ENCODE measurements at regions of chr16 and their contacts with region 1.

Region 1: DNA sequence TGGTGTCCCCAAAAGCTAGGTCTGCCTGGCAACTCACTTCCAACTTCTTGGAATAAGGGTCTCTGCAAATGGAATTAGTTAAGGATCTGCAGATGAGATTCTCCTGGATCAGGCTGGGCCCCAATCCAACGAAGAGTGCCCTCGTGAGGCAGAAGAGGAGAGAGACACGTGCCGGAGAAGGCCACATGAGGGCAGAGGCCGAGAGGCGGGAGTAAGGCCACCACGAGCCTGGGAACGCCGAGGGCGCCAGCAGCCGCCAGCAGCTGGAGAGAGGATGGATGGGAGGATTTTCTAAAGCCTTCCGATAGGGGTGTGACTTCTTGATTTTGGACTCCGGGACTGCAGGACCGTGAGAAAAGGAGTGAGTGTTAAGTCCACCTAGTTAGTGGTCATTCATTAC is 76.3 kb downstream of the JPH3 start:
- DNase-seq: no peak
- H3K4me3 ChIP-seq: no peak overlapping the region
- H3K27ac ChIP-seq: no peak overlapping the region
- H3K4me1 ChIP-seq: peaks cover 0 to 3% (median 1%) of the 10 kb centered on the region in 4 experiments; a peak in 3 of 7 replicates
- H3K27me3 ChIP-seq: no peaks in the 10 kb centered on the region
- CTCF ChIP-seq: no peak
- EP300 ChIP-seq: no peak
- POLR2A ChIP-seq: no peak
- RAD21 ChIP-seq: no peak

Region 2: GRCh38 chr16:87507351-87508069 is 171.1 kb before region 1 on chr16:
- CTCF ChIA-PET with region 1: no interaction called
- POLR2A ChIA-PET with region 1: no interaction called
- DNase-seq: no peak
- H3K4me3 ChIP-seq: no peak overlapping the region
- H3K27ac ChIP-seq: no peak overlapping the region
- H3K4me1 ChIP-seq: peaks cover 0 to 3% (median 0%) of the 10 kb centered on the region in 4 experiments; a peak in 1 of 7 replicates
- H3K27me3 ChIP-seq: no peaks in the 10 kb centered on the region
- CTCF ChIP-seq: no peak
- EP300 ChIP-seq: no peak
- POLR2A ChIP-seq: no peak
- RAD21 ChIP-seq: no peak

Region 3: GRCh38 chr16:87692760-87693159 is 14.1 kb after region 1 on chr16:
- CTCF ChIA-PET with region 1: interaction called, 11 read pairs
- POLR2A ChIA-PET with region 1: interaction called, 3 read pairs
- DNase-seq: no peak
- H3K4me3 ChIP-seq: no peak overlapping the region
- H3K27ac ChIP-seq: no peak overlapping the region
- H3K4me1 ChIP-seq: no peaks in the 10 kb centered on the region; a peak in 1 of 7 replicates
- H3K27me3 ChIP-seq: no peaks in the 10 kb centered on the region
- CTCF ChIP-seq: peak in 1 of 3 experiments; percentile 20; a peak in 1 of 4 replicates
- EP300 ChIP-seq: no peak
- POLR2A ChIP-seq: no peak
- RAD21 ChIP-seq: no peak; a peak in 1 of 4 replicates

Region 4: GRCh38 chr16:87728026-87728425 is 49.4 kb after region 1 on chr16:
- CTCF ChIA-PET with region 1: no interaction called
- POLR2A ChIA-PET with region 1: no interaction called
- DNase-seq: no peak
- H3K4me3 ChIP-seq: no peak overlapping the region
- H3K27ac ChIP-seq: no peak overlapping the region
- H3K4me1 ChIP-seq: no peaks in the 10 kb centered on the region
- H3K27me3 ChIP-seq: no peaks in the 10 kb centered on the region
- CTCF ChIP-seq: no peak
- EP300 ChIP-seq: no peak
- POLR2A ChIP-seq: no peak
- RAD21 ChIP-seq: no peak